GM13976 (cell line): ENCODE measurements at regions of chr4 and their contacts with region 1.

Region 1: GRCh38 chr4:150867148-150867547 is 147.9 kb downstream of the LRBA start:
- DNase-seq: peak; percentile 65
- CTCF ChIP-seq: peak; percentile 21

Region 2: DNA sequence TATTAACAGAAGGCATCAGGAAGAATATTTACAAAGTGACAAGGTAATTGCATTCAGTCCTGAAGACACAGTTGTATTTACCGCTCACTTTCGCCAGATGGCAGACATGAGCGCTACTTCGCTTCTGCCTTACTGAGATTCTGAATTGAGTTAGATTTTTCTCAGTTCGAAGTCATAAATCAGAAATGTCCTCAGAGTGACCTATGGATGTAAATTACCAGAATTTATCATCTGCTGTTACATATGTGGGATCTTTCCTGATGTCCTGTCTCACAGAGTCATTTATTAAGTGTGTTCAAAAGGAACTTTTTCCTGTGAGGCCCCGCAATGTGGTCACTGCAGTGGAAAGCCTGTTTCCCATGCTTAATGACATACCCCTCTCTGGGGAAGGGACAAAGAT is 886.2 kb before region 1 on chr4:
- in situ Hi-C with region 1: loop called (anchors 25 kb)
- DNase-seq: peak; percentile 16
- CTCF ChIP-seq: peak; percentile 64

Region 3: GRCh38 chr4:150297861-150298474 is 569.2 kb before region 1 on chr4:
- in situ Hi-C with region 1: loop called (anchors 10 kb)
- DNase-seq: peak; percentile 22
- CTCF ChIP-seq: peak; percentile 29

Region 4: GRCh38 chr4:150439451-150439933 is 427.7 kb before region 1 on chr4:
- in situ Hi-C with region 1: no loop called
- DNase-seq: no peak
- CTCF ChIP-seq: no peak

Region 5: DNA sequence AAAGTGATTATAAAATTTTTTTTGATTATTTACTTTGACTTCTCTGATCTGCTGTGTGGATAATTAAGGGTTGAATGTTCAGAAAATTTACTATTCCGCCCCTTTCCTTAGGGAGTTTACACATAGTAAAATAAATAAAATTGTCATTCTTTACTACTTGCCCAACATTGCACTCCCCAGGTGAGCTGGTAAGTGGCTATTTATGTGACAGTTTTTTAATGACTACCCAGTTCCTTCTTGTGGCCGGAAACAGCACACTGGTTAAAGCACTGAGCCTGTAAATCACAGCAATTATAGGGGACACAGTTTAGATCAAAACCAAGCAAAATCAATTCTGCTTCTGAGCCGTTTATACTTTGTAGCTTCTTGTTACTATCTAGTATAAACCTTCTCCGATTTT is 699.9 kb after region 1 on chr4:
- in situ Hi-C with region 1: no loop called
- DNase-seq: peak; percentile 6
- CTCF ChIP-seq: no peak